Heart left ventricle (tissue), 16 donors: ENCODE measurements at regions of chr15 and their contacts with region 1.

Region 1: DNA sequence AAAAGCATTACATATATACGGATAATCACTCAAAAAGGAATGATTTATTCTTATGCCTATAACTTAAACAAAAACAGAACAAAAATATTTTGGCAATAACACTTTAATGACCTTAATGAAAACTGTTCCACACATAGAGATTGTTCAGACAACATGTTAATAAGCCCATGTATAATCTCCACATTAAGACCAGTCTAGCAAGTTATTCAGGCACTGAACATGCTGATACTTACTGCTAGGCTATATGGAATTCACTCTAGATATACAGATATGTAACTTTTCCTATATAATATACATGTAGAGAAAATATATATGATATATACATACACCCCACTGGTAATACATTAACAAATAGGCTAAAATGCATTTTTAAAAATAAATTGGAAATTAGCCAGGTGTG is 43.8 kb upstream of the USP50 start:
- DNase-seq: no peak
- ATAC-seq: no peak
- H3K4me3 ChIP-seq: no peak overlapping the region
- H3K27ac ChIP-seq: no peak overlapping the region
- H3K4me1 ChIP-seq: no peaks in the 10 kb centered on the region
- H3K27me3 ChIP-seq: no peaks in the 10 kb centered on the region
- CTCF ChIP-seq: no peak
- POLR2A ChIP-seq: no peak

Region 2: GRCh38 chr15:50496692-50497091 is 93.6 kb before region 1 on chr15:
- intact Hi-C with region 1: loop called in 1 of 10 experiments (anchors 10 kb)
- DNase-seq: no peak
- ATAC-seq: no peak
- H3K4me3 ChIP-seq: no peak overlapping the region
- H3K27ac ChIP-seq: no peak overlapping the region
- H3K4me1 ChIP-seq: peaks cover 0 to 4% (median 0%) of the 10 kb centered on the region in 12 donors
- H3K27me3 ChIP-seq: no peaks in the 10 kb centered on the region
- CTCF ChIP-seq: no peak
- POLR2A ChIP-seq: no peak

Region 3: DNA sequence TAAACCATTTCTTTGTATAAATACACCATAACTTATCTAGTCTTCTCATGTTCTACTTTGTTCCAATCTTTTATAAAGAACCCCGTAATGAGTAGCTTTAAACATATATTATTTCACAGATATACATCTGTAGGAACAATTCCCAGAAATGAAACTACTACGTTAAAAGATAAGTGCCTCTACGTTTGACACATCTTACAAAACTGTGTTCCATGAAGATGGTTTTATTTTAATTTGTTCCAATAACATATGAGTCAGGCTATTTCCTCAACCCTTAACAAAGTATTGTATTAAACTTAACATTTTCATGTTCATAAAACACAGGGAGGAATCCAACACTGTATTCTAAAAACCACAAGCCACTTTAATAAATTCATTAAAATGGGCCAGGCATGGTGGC is 43.4 kb after region 1 on chr15:
- intact Hi-C with region 1: loop called in 2 of 10 experiments (anchors 5 to 10 kb)
- DNase-seq: no peak
- ATAC-seq: no peak
- H3K4me3 ChIP-seq: no peak overlapping the region
- H3K27ac ChIP-seq: no peak overlapping the region
- H3K4me1 ChIP-seq: peaks cover 0 to under 1% (median 0%) of the 10 kb centered on the region in 12 donors
- H3K27me3 ChIP-seq: no peaks in the 10 kb centered on the region
- CTCF ChIP-seq: no peak
- POLR2A ChIP-seq: no peak